HepG2 (cell line): ENCODE measurements at regions of chr1 and their contacts with region 1.

Region 1: DNA sequence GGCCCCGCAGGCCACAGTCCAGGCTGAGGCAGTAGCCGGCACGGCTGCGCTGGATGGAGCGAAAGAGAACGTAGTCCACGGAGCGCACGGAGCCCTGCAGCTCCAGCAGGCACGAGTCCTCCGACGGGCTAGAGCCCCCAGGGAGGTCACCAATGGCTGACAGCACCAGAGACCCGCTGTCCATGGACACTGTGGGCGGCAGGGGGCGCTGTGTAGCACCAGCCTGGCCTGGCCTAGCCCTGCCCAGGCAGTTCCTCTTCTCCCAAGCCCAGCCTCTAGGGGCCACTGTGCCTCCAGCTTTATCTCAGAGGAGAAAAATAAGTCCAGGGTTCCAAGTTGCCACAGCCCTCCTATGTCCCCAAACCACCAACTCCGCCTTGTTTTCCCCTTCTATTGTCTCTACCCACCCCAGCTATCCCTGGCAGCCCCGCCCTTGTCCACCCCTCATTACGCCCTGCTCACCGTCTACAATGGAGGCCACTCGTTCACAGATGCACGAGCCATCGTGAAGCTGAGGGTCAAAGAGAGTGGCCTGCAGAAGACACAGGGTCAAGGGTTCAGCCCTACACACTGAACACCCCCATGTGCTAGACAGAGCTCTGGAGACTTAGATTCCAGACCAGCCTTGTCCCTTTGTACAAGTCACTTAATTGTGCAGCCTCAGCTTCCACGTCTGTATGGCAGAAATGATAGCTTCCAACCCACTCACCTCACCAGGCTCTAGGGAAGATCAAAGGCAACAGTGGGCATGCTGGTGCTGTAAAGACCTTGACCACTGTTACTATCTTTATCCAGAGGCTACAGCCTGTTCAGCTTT is 4.4 kb downstream of the ENTREP3 start:
- DNase-seq: peak; percentile 90
- ATAC-seq: peak; percentile 87
- H3K4me3 ChIP-seq: peak overlapping the region in 1 of 3 experiments; percentile 41; a peak in 2 of 6 replicates
- H3K27ac ChIP-seq: peak overlapping the region; percentile 71
- H3K4me1 ChIP-seq: peaks cover 44% of the 10 kb centered on the region
- H3K27me3 ChIP-seq: no peaks in the 10 kb centered on the region
- CTCF ChIP-seq: peak; percentile 99
- EP300 ChIP-seq: no peak
- POLR2A ChIP-seq: no peak
- RAD21 ChIP-seq: peak; percentile 97

Region 2: GRCh38 chr1:154657556-154657955 is 593.3 kb before region 1 on chr1:
- CTCF ChIA-PET with region 1: no interaction called
- POLR2A ChIA-PET with region 1: no interaction called
- in situ Hi-C with region 1: no loop called
- intact Hi-C with region 1: no loop called
- DNase-seq: no peak
- ATAC-seq: no peak
- H3K4me3 ChIP-seq: no peak overlapping the region
- H3K27ac ChIP-seq: no peak overlapping the region
- H3K4me1 ChIP-seq: no peaks in the 10 kb centered on the region
- H3K27me3 ChIP-seq: 0 out of 5 replicates have a peak, but pooled peaks cover 0 to 3% of the 10 kb centered on the region in 2 experiments
- CTCF ChIP-seq: no peak
- EP300 ChIP-seq: no peak
- POLR2A ChIP-seq: no peak
- RAD21 ChIP-seq: no peak

Region 3: GRCh38 chr1:155063550-155064110 is 187.2 kb before region 1 on chr1 and contains the start of gene EFNA4:
- CTCF ChIA-PET with region 1: no interaction called
- POLR2A ChIA-PET with region 1: no interaction called
- in situ Hi-C with region 1: no loop called
- intact Hi-C with region 1: no loop called
- DNase-seq: peak; percentile 82
- ATAC-seq: peak; percentile 84
- H3K4me3 ChIP-seq: peak within 1 kb of the TSS; percentile 72 to 91 (median 83)
- H3K27ac ChIP-seq: peak within 1 kb of the TSS; percentile 92
- H3K4me1 ChIP-seq: peaks cover 32% of the 10 kb centered on the region
- H3K27me3 ChIP-seq: no peaks in the 10 kb centered on the region
- CTCF ChIP-seq: no peak; the same call in 1 of the 2 replicates
- EP300 ChIP-seq: no peak
- POLR2A ChIP-seq: peak; percentile 81 to 95
- RAD21 ChIP-seq: no peak
- total RNA-seq, gene EFNA4: 9.3 and 17.2 TPM in 2 replicates

Region 4: DNA sequence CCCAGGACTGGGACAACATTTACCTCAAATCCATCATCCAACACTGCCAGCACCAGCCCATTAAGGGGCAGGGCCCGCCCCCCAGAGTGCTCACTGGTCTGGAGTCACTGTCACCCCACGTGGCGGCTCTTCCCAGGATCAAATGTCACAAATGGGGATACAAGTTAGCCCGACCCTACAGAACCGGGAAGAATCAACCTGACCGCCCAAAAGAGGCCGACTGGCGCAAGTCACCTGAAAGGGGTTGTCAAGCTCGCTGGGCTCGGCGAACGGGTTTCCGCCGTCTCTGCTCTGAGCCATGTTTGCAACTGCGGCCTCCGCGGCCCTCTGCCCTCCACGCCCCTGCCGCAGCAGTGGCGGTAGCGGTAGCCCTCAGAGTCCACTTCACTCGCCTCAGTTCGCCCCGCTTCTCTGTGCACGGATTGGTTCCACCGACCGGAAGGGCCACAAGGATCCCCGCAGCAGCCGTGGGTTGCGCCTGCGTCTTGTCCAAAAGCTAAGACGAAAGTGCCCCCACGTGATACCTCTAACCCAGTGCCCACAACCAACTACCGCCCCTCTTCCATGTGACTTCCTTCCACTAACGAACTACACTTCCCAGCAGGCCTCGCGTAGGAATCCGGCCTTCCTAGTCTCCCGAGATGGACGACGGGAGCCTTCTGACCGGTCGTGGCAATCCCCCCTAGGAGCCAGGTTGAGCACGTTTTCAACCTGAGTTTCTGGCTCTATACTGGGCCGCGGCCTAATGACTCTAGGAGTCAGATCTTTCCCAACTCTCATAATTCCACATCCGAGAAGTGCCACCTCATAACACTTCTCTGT is 11.2 kb after region 1 on chr1 and contains the start of gene SCAMP3:
- CTCF ChIA-PET with region 1: interaction called, 6 read pairs
- POLR2A ChIA-PET with region 1: interaction called, 16 read pairs
- in situ Hi-C with region 1: no loop called
- intact Hi-C with region 1: no loop called
- DNase-seq: peak; percentile 97
- ATAC-seq: peak; percentile 95
- H3K4me3 ChIP-seq: peak within 1 kb of the TSS; percentile 84 to 90 (median 84)
- H3K27ac ChIP-seq: peak within 1 kb of the TSS; percentile 73
- H3K4me1 ChIP-seq: peaks cover 15% of the 10 kb centered on the region
- H3K27me3 ChIP-seq: no peaks in the 10 kb centered on the region; a peak in 1 of 5 replicates
- CTCF ChIP-seq: peak; percentile 25; the same call in 1 of the 2 replicates
- EP300 ChIP-seq: no peak; a peak in 1 of 4 replicates
- POLR2A ChIP-seq: peak; percentile 83 to 91
- RAD21 ChIP-seq: peak; percentile 8; the same call in 1 of the 2 replicates
- total RNA-seq, gene SCAMP3: 27.0 and 46.8 TPM in 2 replicates

Region 5: GRCh38 chr1:155277070-155277895 is 26.4 kb after region 1 on chr1 and contains the start of gene HCN3:
- CTCF ChIA-PET with region 1: interaction called, 3 read pairs
- POLR2A ChIA-PET with region 1: interaction called, 23 read pairs
- in situ Hi-C with region 1: no loop called
- intact Hi-C with region 1: no loop called
- DNase-seq: peak; percentile 93
- ATAC-seq: peak; percentile 79
- H3K4me3 ChIP-seq: peak within 1 kb of the TSS; percentile 87 to 97 (median 95)
- H3K27ac ChIP-seq: peak within 1 kb of the TSS; percentile 38
- H3K4me1 ChIP-seq: peaks cover 44% of the 10 kb centered on the region
- H3K27me3 ChIP-seq: no peaks in the 10 kb centered on the region; a peak in 2 of 5 replicates
- CTCF ChIP-seq: peak; percentile 82
- EP300 ChIP-seq: no peak
- POLR2A ChIP-seq: no peak
- RAD21 ChIP-seq: peak; percentile 91
- total RNA-seq, gene HCN3: 1.3 and 2.4 TPM in 2 replicates

Region 6: GRCh38 chr1:155323798-155324610 is 73.2 kb after region 1 on chr1:
- CTCF ChIA-PET with region 1: interaction called, 71 read pairs
- POLR2A ChIA-PET with region 1: interaction called, 24 read pairs
- in situ Hi-C with region 1: no loop called
- intact Hi-C with region 1: loop called (anchors 1 kb)
- DNase-seq: peak; percentile 93
- ATAC-seq: peak; percentile 84
- H3K4me3 ChIP-seq: peak overlapping the region; percentile 80 to 94 (median 81)
- H3K27ac ChIP-seq: peak overlapping the region; percentile 71
- H3K4me1 ChIP-seq: peaks cover 36% of the 10 kb centered on the region
- H3K27me3 ChIP-seq: no peaks in the 10 kb centered on the region; a peak in 1 of 5 replicates
- CTCF ChIP-seq: no peak
- EP300 ChIP-seq: no peak
- POLR2A ChIP-seq: peak in 1 of 2 experiments; percentile 61; a peak in 2 of 4 replicates
- RAD21 ChIP-seq: no peak